Naive thymus-derived CD4-positive, alpha-beta T cell (primary cell): ENCODE measurements at regions of chr19 and their contacts with region 1.

Region 1: GRCh38 chr19:50025024-50025789 is at the start of gene VRK3:
- DNase-seq: peak; percentile 93 to 100 (median 99)
- ATAC-seq: peak; percentile 91
- H3K4me3 ChIP-seq: peak within 1 kb of the TSS; percentile 85
- H3K4me3 Mint-ChIP-seq: peak within 1 kb of the TSS; percentile 93 to 99 (median 94)
- H3K27ac ChIP-seq: peak within 1 kb of the TSS; percentile 96
- H3K27ac Mint-ChIP-seq: peak within 1 kb of the TSS; percentile 98 to 100 (median 99)
- H3K4me1 ChIP-seq: peaks cover 19 to 29% of the 10 kb centered on the region in 2 donors
- H3K4me1 Mint-ChIP-seq: peaks cover 30 to 73% (median 58%) of the 10 kb centered on the region in 7 donors
- H3K27me3 ChIP-seq: no peaks in the 10 kb centered on the region
- H3K27me3 Mint-ChIP-seq: peaks cover 0 to 6% (median 0%) of the 10 kb centered on the region in 5 donors
- total RNA-seq, gene VRK3: 70.6 to 121 (median 84.7) TPM

Region 2: DNA sequence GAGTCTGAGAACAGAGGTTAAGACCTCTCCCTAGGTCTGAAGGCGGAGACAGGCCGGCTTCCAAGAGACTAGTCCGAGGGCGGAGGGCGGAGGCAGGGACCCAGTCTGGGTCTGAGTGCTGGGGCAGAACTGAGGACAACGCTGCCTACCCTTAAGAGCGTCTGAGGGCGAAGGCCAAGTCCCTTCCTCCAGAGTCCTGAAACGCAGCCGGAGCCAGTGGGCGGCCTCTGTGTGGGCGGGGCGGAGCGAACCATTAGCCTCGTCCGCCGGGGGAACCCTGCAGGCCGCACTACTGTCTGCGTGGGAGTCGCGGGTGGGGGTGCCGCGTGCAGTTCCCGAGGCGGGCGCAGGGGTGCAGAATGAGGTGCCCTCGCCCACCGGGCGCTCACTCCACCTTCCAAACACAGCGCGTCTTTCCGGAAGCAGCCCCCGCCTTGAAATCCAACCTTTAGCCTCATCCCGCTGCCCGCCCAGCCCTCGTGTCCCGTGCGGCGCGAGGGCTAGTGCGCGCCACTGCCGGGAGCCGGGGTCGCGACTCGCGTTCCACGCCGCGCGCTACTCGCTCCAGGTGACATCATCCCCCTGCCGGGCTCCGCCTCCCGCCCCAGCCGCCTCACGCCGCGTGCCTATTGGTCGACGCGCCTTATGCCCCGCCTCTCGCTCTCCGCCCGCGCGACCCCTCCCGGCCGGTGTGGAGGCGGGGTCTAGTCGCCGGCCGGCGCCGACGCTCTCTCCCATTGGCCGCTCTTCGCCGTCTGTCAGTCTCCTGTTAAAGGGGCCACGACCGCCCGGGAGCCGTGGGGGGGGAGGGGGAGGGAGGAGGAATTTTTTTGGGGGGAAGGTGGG is 906.4 kb before region 1 on chr19 and contains the start of gene C19orf73:
- CTCF ChIA-PET with region 1: no interaction called
- POLR2A ChIA-PET with region 1: no interaction called
- intact Hi-C with region 1: loop called in 1 of 2 experiments (anchors 5 kb)
- DNase-seq: peak; percentile 93 to 98 (median 97)
- ATAC-seq: peak; percentile 91
- H3K4me3 ChIP-seq: peak within 1 kb of the TSS; percentile 83
- H3K4me3 Mint-ChIP-seq: peak within 1 kb of the TSS; percentile 83 to 91 (median 88)
- H3K27ac ChIP-seq: peak within 1 kb of the TSS; percentile 92
- H3K27ac Mint-ChIP-seq: peak within 1 kb of the TSS; percentile 89 to 95 (median 93)
- H3K4me1 ChIP-seq: peaks cover 13 to 16% of the 10 kb centered on the region in 2 donors
- H3K4me1 Mint-ChIP-seq: peaks cover 25 to 43% (median 39%) of the 10 kb centered on the region in 7 donors
- H3K27me3 ChIP-seq: no peaks in the 10 kb centered on the region
- H3K27me3 Mint-ChIP-seq: peaks cover 0 to 27% (median 0%) of the 10 kb centered on the region in 5 donors
- total RNA-seq, gene C19orf73: 1.3 to 2.8 (median 2.2) TPM

Region 3: DNA sequence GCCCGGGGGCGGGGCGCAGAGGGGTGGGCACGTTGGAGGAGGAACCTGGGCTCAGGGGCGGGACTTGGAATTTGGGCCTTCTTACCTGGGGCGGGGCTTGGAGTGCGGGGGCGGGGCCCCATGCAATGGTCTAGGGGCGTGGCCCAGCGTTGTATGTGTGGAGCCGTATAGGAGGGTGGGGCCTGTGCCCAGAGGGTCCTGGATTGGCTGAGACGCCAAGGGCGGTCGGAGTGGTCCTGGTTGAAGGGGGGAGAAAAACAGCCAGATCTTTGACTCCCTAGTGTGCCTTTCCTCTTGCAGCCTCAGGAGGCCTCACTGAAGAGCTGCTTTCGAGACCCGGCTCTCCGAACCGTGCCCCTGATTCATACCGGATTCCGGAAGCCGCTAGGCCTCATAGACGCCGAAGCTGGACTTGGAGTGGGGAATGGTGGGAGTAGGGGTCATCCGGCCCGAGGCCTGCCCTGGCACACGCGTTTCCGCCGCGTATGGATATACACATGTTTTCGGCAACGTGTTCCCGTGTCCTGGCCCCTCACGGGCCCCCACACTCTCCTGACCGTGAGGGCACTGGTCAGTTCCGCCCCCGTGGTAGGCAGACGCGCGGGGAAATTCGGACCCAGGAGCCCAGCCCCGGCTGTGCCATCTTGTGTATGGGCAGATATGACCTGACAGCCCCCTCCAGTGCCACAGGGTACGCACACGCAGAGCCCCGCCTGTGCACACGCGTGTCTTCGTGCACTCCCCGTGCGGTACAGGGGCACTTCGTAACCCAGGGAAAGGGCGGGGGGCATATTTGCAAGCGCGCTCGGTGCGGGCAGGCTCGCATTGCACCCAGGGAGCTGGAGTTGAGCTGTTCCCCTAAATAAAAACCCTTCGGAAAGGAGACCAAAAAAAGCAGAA is 434.9 kb before region 1 on chr19:
- CTCF ChIA-PET with region 1: no interaction called
- POLR2A ChIA-PET with region 1: no interaction called
- intact Hi-C with region 1: loop called in 1 of 2 experiments (anchors 2 kb)
- DNase-seq: peak; percentile 85 to 98 (median 97)
- ATAC-seq: peak; percentile 90
- H3K4me3 ChIP-seq: peak overlapping the region; percentile 97
- H3K4me3 Mint-ChIP-seq: peak overlapping the region; percentile 85 to 95 (median 94)
- H3K27ac ChIP-seq: peak overlapping the region; percentile 86
- H3K27ac Mint-ChIP-seq: peak overlapping the region; percentile 76 to 95 (median 93)
- H3K4me1 ChIP-seq: peaks cover 15 to 18% of the 10 kb centered on the region in 2 donors
- H3K4me1 Mint-ChIP-seq: peaks cover 26 to 42% (median 31%) of the 10 kb centered on the region in 7 donors
- H3K27me3 ChIP-seq: no peaks in the 10 kb centered on the region
- H3K27me3 Mint-ChIP-seq: peaks cover 0 to 12% (median 0%) of the 10 kb centered on the region in 5 donors

Region 4: GRCh38 chr19:49896863-49897621 is 128.2 kb before region 1 on chr19 and contains the start of gene IL4I1:
- CTCF ChIA-PET with region 1: no interaction called
- POLR2A ChIA-PET with region 1: no interaction called
- intact Hi-C with region 1: loop called in 1 of 2 experiments (anchors 1 kb)
- DNase-seq: peak in 8 of 9 donors; percentile 15 to 62 (median 38)
- ATAC-seq: peak; percentile 72
- H3K4me3 ChIP-seq: peak within 1 kb of the TSS; percentile 36
- H3K4me3 Mint-ChIP-seq: peak within 1 kb of the TSS; percentile 26 to 81 (median 74)
- H3K27ac ChIP-seq: peak within 1 kb of the TSS; percentile 56
- H3K27ac Mint-ChIP-seq: peak within 1 kb of the TSS; percentile 79 to 97 (median 91)
- H3K4me1 ChIP-seq: peaks cover 18 to 19% of the 10 kb centered on the region in 2 donors
- H3K4me1 Mint-ChIP-seq: peaks cover 15 to 41% (median 23%) of the 10 kb centered on the region in 7 donors
- H3K27me3 ChIP-seq: no peaks in the 10 kb centered on the region
- H3K27me3 Mint-ChIP-seq: no peaks in the 10 kb centered on the region
- total RNA-seq, gene IL4I1: 1.2 to 6.8 (median 1.9) TPM

Region 5: GRCh38 chr19:50050384-50051224 is 25.4 kb after region 1 on chr19:
- CTCF ChIA-PET with region 1: no interaction called
- POLR2A ChIA-PET with region 1: interaction called, 4 read pairs
- intact Hi-C with region 1: loop called (anchors 1 to 2 kb)
- DNase-seq: peak; percentile 58 to 86 (median 79)
- ATAC-seq: peak; percentile 90
- H3K4me3 ChIP-seq: peak overlapping the region; percentile 85
- H3K4me3 Mint-ChIP-seq: peak overlapping the region; percentile 78 to 99 (median 90)
- H3K27ac ChIP-seq: peak overlapping the region; percentile 85
- H3K27ac Mint-ChIP-seq: peak overlapping the region; percentile 73 to 97 (median 89)
- H3K4me1 ChIP-seq: peaks cover 0 to 13% of the 10 kb centered on the region in 2 donors
- H3K4me1 Mint-ChIP-seq: peaks cover 5 to 20% (median 14%) of the 10 kb centered on the region in 7 donors
- H3K27me3 ChIP-seq: no peaks in the 10 kb centered on the region
- H3K27me3 Mint-ChIP-seq: peaks cover 0 to 6% (median 0%) of the 10 kb centered on the region in 5 donors

Region 6: GRCh38 chr19:50476224-50476942 is 451.2 kb after region 1 on chr19 and contains the starts of genes EMC10 and GARIN5A:
- CTCF ChIA-PET with region 1: no interaction called
- POLR2A ChIA-PET with region 1: no interaction called
- intact Hi-C with region 1: loop called in 1 of 2 experiments (anchors 1 kb)
- DNase-seq: peak; percentile 92 to 96 (median 95)
- ATAC-seq: peak; percentile 97
- H3K4me3 ChIP-seq: peak within 1 kb of the TSS; percentile 96
- H3K4me3 Mint-ChIP-seq: peak within 1 kb of the TSS; percentile 94 to 99 (median 98)
- H3K27ac ChIP-seq: peak within 1 kb of the TSS; percentile 96
- H3K27ac Mint-ChIP-seq: peak within 1 kb of the TSS; percentile 88 to 98 (median 96)
- H3K4me1 ChIP-seq: peaks cover 14 to 19% of the 10 kb centered on the region in 2 donors
- H3K4me1 Mint-ChIP-seq: peaks cover 21 to 36% (median 27%) of the 10 kb centered on the region in 7 donors
- H3K27me3 ChIP-seq: no peaks in the 10 kb centered on the region
- H3K27me3 Mint-ChIP-seq: no peaks in the 10 kb centered on the region
- total RNA-seq, gene EMC10: 75.5 to 95.2 (median 88.1) TPM
- total RNA-seq, gene GARIN5A: 0.59 to 0.93 (median 0.68) TPM in 4 of 5 experiments, not detected in the other

Region 7: DNA sequence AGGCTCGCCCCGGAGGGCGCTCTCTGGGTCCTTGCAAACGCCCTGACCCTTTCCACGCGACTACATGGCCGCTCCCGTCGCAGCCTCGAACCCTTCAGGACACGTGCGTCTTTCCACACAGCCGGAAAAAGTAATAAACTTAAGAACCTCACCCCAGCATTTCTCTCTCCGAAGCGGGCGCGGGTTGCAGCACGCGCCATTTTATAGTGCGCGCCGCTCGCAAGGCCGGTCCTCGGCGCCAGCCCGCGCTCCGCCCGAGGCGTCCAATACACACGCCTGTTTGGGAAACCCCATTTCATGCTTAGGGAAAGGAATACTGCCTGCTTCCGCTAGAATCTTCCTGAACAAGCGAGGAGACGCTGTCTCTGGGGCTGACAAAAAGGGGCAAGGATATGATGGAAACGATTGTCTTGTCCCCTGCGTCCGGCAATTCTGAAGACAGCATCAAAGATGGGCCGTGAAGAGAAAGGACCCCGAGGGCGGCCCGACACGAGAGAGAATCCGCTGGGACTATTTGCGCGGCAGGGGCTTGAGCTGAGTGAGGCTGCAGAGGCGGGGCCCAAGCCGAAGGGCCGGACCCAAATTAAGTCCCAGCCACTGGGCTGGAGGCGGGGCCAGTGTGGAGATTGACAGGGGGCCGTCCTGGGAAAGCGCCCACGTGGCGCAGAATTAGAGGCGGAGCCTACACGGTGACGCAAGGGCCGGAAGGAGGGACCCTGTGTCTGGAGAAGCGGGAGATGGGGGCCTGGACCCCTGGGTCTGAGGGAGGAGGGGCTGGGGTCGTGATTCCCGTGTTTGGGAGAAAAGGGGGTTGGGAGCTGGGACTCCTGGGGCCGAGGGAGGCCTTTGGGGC is 779.4 kb after region 1 on chr19:
- CTCF ChIA-PET with region 1: no interaction called
- POLR2A ChIA-PET with region 1: no interaction called
- intact Hi-C with region 1: loop called (anchors 5 to 10 kb)
- DNase-seq: peak; percentile 87 to 99 (median 98)
- ATAC-seq: peak; percentile 98
- H3K4me3 ChIP-seq: peak overlapping the region; percentile 97
- H3K4me3 Mint-ChIP-seq: peak overlapping the region; percentile 92 to 100 (median 96)
- H3K27ac ChIP-seq: peak overlapping the region; percentile 97
- H3K27ac Mint-ChIP-seq: peak overlapping the region; percentile 97 to 100 (median 100)
- H3K4me1 ChIP-seq: peaks cover 15 to 19% of the 10 kb centered on the region in 2 donors
- H3K4me1 Mint-ChIP-seq: peaks cover 21 to 50% (median 42%) of the 10 kb centered on the region in 7 donors
- H3K27me3 ChIP-seq: no peaks in the 10 kb centered on the region
- H3K27me3 Mint-ChIP-seq: no peaks in the 10 kb centered on the region